Gastrocnemius medialis (tissue), 4 donors: ENCODE measurements at regions of chr11 and their contacts with region 1.

Region 1: DNA sequence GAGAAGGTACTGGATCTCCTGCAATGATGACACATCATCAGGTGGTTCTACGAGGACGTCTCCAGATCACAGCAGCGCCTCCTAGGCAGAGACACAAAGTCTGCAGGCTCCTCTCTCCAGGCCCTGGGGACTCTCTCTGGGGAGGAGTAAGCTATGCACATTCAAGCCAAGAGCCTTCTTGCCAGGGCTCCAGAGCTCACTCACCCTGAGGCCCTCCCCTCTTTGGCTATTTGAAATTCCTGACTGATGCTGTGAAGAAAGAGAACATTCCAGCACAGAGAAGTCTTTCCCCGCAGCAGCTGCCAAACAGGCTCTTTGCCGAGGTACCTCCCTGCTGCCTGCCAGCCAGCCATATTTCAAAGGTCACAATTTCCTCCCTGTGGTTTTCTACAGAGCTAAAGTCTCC is 204.9 kb downstream of the CSNK2A3 start:
- DNase-seq: peak; percentile 86 to 94
- ATAC-seq: peak; percentile 79 to 84
- H3K4me3 ChIP-seq: no peak overlapping the region
- H3K27ac ChIP-seq: peak overlapping the region; percentile 79 to 95 (median 92)
- H3K4me1 ChIP-seq: peaks cover 27 to 49% of the 10 kb centered on the region in 2 donors
- H3K27me3 ChIP-seq: no peaks in the 10 kb centered on the region
- CTCF ChIP-seq: peak; percentile 20 to 46 (median 37)
- POLR2A ChIP-seq: no peak

Region 2: GRCh38 chr11:10906513-10906912 is 241.6 kb before region 1 on chr11:
- in situ Hi-C with region 1: no loop called
- intact Hi-C with region 1: loop called (anchors 10 kb)
- DNase-seq: no peak
- ATAC-seq: peak; percentile 51 to 75
- H3K4me3 ChIP-seq: no peak overlapping the region
- H3K27ac ChIP-seq: peak overlapping the region in 2 of 4 donors; percentile 9 to 51
- H3K4me1 ChIP-seq: peaks cover 12 to 17% of the 10 kb centered on the region in 2 donors
- H3K27me3 ChIP-seq: no peaks in the 10 kb centered on the region
- CTCF ChIP-seq: peak in 3 of 5 experiments; percentile 4 to 45 (median 28)
- POLR2A ChIP-seq: no peak

Region 3: GRCh38 chr11:11057472-11057854 is 90.6 kb before region 1 on chr11:
- in situ Hi-C with region 1: no loop called
- intact Hi-C with region 1: loop called (anchors 5 kb)
- DNase-seq: no peak
- ATAC-seq: peak; percentile 61 to 63
- H3K4me3 ChIP-seq: no peak overlapping the region
- H3K27ac ChIP-seq: peak overlapping the region in 2 of 4 donors; percentile 68 to 74
- H3K4me1 ChIP-seq: peaks cover 11 to 18% of the 10 kb centered on the region in 2 donors
- H3K27me3 ChIP-seq: no peaks in the 10 kb centered on the region
- CTCF ChIP-seq: no peak
- POLR2A ChIP-seq: no peak

Region 4: DNA sequence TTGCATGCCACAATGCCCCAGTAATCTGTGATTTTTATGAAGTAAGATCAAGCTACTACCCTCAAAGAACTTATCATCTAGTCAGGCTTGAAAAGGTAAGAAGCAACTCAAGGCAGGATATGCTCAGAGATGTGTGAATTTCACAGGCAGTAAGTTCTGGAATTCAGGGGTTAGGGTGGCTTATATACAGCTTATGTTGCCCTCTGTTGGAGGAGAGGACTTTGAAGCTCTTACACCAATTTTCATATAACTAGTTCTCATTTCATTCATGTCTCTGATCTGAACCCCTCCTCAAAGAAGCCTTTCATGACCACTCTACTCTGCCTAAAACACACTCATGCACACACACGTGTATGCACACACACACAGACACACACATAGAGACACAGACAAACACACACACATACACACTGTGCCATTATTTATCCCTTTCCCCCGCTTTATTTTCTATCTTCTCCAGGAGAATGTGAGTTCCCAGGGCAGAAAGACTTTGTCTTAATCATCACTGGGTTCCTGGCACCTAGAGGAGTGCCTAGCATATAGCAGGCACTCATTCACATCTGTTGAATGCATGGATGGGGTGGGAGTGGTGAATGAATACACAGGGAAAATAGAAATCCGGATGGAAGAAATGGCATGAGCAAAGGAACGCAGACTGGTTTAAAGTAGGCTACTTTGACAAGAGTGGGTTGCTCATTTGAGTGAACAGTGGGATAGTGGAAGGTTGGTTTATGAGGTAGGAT is 69.6 kb before region 1 on chr11:
- in situ Hi-C with region 1: no loop called
- intact Hi-C with region 1: loop called (anchors 5 kb)
- DNase-seq: no peak
- ATAC-seq: peak; percentile 43 to 52
- H3K4me3 ChIP-seq: no peak overlapping the region
- H3K27ac ChIP-seq: peak overlapping the region in 1 of 4 donors; percentile 30
- H3K4me1 ChIP-seq: peaks cover 30 to 38% of the 10 kb centered on the region in 2 donors
- H3K27me3 ChIP-seq: no peaks in the 10 kb centered on the region
- CTCF ChIP-seq: peak in 2 of 5 experiments; percentile 9 to 14
- POLR2A ChIP-seq: no peak

Region 5: GRCh38 chr11:11329062-11329806 is 181.1 kb after region 1 on chr11:
- in situ Hi-C with region 1: no loop called
- intact Hi-C with region 1: loop called (anchors 5 kb)
- DNase-seq: no peak
- ATAC-seq: peak; percentile 55 to 79
- H3K4me3 ChIP-seq: no peak overlapping the region
- H3K27ac ChIP-seq: peak overlapping the region in 1 of 4 donors; percentile 49
- H3K4me1 ChIP-seq: peaks cover 0 to 5% of the 10 kb centered on the region in 2 donors
- H3K27me3 ChIP-seq: no peaks in the 10 kb centered on the region
- CTCF ChIP-seq: no peak
- POLR2A ChIP-seq: no peak